Posterior vena cava (tissue), 2 donors: ENCODE measurements at regions of chr6 and their contacts with region 1.

Region 1: DNA sequence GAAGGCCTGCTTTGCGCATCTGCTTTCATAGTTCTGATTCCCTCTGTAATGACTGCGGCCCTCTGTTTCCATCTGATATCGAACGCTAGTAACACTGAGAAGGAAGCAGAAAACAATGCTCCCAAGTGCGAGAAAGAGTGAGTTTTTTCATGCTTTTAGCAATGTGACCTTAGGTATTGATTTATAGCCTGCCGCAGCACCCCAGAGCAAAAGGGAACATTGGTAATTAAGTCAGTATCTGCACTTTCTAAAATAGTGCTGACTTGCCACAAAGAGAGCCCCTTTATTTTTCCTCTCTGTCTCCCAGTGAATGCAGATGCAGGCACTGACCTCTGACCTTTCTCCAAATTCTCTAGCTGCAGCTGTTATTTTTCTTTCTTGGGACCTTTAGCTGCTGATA is 129.8 kb downstream of the HDGFL1 start:
- DNase-seq: no peak

Region 2: GRCh38 chr6:22575190-22575589 is 124.0 kb before region 1 on chr6:
- intact Hi-C with region 1: no loop called
- DNase-seq: no peak

Region 3: DNA sequence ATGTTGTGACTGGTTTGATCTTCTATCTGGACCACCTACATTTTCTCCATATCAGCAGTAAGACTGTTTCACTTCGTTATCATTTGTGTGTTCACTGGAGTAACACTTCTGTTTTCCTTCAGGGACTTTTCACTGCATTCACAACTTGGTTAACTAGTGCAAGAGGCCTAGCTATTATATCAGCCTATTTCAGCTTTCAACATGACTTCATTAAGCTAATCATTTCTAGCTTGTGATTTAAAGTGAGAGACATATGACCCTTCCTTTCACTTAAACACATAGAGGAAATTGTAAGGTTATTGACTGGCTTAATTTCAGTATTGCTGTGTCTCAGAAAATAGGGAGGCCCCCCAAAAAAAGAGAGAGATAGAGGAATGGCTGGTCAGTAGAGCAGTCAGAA is 804.0 kb after region 1 on chr6:
- intact Hi-C with region 1: loop called in 1 of 2 experiments (anchors 5 kb)
- DNase-seq: no peak